ENCODE measurements at regions of chr6 and their contacts with region 1.

Region 1: DNA sequence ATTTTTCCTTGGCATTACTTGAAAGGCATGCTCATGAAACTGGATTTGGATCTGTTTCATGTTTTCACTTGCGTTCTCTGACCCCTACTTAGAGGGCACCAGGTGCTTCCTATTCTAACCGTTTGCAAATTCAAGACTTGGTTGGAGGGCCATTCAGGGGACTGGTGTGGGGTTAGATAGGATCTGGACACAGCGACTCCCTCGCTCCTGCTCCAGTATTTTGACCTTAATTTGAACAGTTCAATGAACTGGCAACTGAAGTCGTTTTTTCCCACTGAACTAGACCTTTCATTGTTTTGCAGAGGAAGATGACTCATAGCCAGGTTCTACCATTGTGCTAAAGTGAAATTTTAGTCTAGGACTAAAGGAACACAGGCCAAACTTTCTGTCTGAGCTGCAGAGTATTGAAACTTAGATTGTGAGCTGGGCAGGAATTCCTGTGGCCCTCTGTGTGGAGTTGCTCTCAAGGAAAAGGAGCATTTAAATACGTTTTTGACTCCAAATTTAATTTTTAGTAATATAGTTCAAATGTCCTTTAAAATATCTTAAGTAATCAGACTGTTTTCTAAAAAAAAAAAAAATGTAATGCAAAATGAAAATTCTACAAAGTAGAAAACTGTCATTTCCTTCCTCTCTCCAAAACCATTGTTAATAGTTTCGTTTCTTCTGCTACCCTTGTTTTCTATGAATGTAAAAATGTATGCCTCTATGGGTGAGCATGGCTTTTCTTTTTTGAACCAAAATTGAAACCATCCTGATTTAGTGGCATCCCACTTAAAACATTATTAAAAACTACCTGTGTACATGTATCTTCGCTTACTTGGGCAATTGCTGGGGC is 64.8 kb downstream of the UTRN start:
- DNase-seq: no peak
- H3K4me3 Mint-ChIP-seq: peak overlapping the region; percentile 65
- H3K27ac Mint-ChIP-seq: peak overlapping the region; percentile 85
- H3K4me1 Mint-ChIP-seq: peaks cover 88% of the 10 kb centered on the region
- H3K27me3 Mint-ChIP-seq: no peaks in the 10 kb centered on the region

Region 2: GRCh38 chr6:144248476-144249301 is 101.2 kb before region 1 on chr6:
- CTCF ChIA-PET with region 1: no interaction called
- intact Hi-C with region 1: no loop called
- DNase-seq: peak; percentile 9
- H3K4me3 Mint-ChIP-seq: no peak overlapping the region
- H3K27ac Mint-ChIP-seq: peak overlapping the region; percentile 32
- H3K4me1 Mint-ChIP-seq: peaks cover 16% of the 10 kb centered on the region
- H3K27me3 Mint-ChIP-seq: peaks cover 4% of the 10 kb centered on the region

Region 3: GRCh38 chr6:144395014-144395413 is 45.1 kb after region 1 on chr6:
- CTCF ChIA-PET with region 1: no interaction called
- intact Hi-C with region 1: loop called (anchors 2 kb)
- DNase-seq: no peak
- H3K4me3 Mint-ChIP-seq: no peak overlapping the region
- H3K27ac Mint-ChIP-seq: no peak overlapping the region
- H3K4me1 Mint-ChIP-seq: peaks cover 42% of the 10 kb centered on the region
- H3K27me3 Mint-ChIP-seq: no peaks in the 10 kb centered on the region